Calu3 (cell line): ENCODE measurements at regions of chr20 and their contacts with region 1.

Region 1: GRCh38 chr20:53677447-53678314 is 84.0 kb upstream of the ZNF217 start:
- DNase-seq: peak; percentile 76
- H3K4me3 Mint-ChIP-seq: peak overlapping the region; percentile 51
- H3K27ac Mint-ChIP-seq: peak overlapping the region; percentile 76
- H3K4me1 Mint-ChIP-seq: peaks cover 45% of the 10 kb centered on the region
- H3K27me3 Mint-ChIP-seq: no peaks in the 10 kb centered on the region
- CTCF ChIP-seq: peak; percentile 40

Region 2: GRCh38 chr20:53594068-53595017 is 83.3 kb before region 1 on chr20:
- CTCF ChIA-PET with region 1: no interaction called
- intact Hi-C with region 1: loop called (anchors 5 kb)
- DNase-seq: peak; percentile 100
- H3K4me3 Mint-ChIP-seq: peak overlapping the region; percentile 69
- H3K27ac Mint-ChIP-seq: peak overlapping the region; percentile 86
- H3K4me1 Mint-ChIP-seq: peaks cover 65% of the 10 kb centered on the region
- H3K27me3 Mint-ChIP-seq: no peaks in the 10 kb centered on the region
- CTCF ChIP-seq: peak; percentile 53

Region 3: DNA sequence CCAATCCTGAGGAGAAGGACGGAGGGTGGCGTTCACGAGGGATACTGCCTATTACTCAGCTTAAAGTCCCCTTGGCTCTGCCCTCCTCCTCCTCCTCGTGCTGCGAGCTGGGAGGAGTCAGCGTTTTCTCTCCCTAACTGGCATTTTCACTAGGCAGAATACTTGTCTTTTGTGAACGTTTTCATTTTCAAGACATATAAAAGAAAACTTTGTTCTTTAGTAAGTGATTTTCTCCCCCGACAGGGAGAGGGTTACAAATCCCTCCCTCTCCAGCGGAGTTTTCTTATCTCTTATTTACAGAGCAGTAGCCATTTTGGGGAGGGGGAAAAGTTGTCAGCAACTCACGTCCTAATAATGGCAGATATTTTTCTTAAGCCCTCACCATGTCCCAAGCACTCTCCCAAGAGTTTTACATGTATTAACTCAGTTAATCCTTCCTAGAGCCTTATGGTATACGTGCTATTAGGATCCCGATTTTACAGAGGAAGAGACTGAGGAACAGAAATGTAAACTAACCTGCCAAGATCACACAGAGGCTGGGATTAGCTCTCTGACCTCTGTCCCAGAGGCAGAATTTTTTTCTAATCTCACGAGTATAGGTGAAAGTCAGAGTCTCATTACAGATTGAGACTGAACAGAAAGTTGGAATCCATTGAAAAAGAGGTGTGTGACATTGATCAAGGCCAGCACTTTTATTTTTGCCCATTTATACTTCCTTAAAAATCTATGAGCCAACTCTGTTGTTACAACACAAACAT is 54.0 kb before region 1 on chr20:
- CTCF ChIA-PET with region 1: no interaction called
- intact Hi-C with region 1: loop called (anchors 5 kb)
- DNase-seq: peak; percentile 71
- H3K4me3 Mint-ChIP-seq: peak overlapping the region; percentile 67
- H3K27ac Mint-ChIP-seq: peak overlapping the region; percentile 99
- H3K4me1 Mint-ChIP-seq: peaks cover 40% of the 10 kb centered on the region
- H3K27me3 Mint-ChIP-seq: no peaks in the 10 kb centered on the region
- CTCF ChIP-seq: no peak

Region 4: DNA sequence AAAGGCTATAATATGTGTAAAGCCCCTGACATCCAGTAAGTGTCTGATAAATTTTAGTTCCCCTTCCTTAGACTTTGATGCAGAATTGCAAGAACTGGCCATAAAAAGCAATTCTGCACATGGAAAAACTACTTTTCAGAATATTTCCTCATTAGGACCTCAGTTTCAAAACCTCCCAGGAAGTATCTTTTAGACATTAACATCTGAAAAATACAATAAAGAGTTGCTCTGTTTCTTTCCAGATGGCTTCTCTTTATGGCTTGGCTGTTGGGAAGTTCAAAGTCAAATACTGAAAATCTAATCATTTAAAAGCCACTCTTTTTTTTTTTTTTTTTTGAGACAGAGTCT is 22.3 kb after region 1 on chr20:
- CTCF ChIA-PET with region 1: no interaction called
- intact Hi-C with region 1: no loop called
- DNase-seq: no peak
- H3K4me3 Mint-ChIP-seq: no peak overlapping the region
- H3K27ac Mint-ChIP-seq: peak overlapping the region; percentile 8
- H3K4me1 Mint-ChIP-seq: peaks cover 22% of the 10 kb centered on the region
- H3K27me3 Mint-ChIP-seq: no peaks in the 10 kb centered on the region
- CTCF ChIP-seq: no peak